ENCODE measurements at regions of chrX and their contacts with region 1.

Region 1: GRCh38 chrX:154748712-154749343 is 2.0 kb downstream of the GAB3 start:
- DNase-seq: peak; percentile 62
- H3K4me3 Mint-ChIP-seq: peak overlapping the region; percentile 15
- H3K27ac Mint-ChIP-seq: no peak overlapping the region
- H3K4me1 Mint-ChIP-seq: peaks cover 15% of the 10 kb centered on the region
- H3K27me3 Mint-ChIP-seq: no peaks in the 10 kb centered on the region

Region 2: GRCh38 chrX:154712781-154713740 is 35.8 kb before region 1 on chrX:
- CTCF ChIA-PET with region 1: interaction called, 36 read pairs
- intact Hi-C with region 1: no loop called
- DNase-seq: peak; percentile 27
- H3K4me3 Mint-ChIP-seq: no peak overlapping the region
- H3K27ac Mint-ChIP-seq: no peak overlapping the region
- H3K4me1 Mint-ChIP-seq: peaks cover 15% of the 10 kb centered on the region
- H3K27me3 Mint-ChIP-seq: no peaks in the 10 kb centered on the region

Region 3: DNA sequence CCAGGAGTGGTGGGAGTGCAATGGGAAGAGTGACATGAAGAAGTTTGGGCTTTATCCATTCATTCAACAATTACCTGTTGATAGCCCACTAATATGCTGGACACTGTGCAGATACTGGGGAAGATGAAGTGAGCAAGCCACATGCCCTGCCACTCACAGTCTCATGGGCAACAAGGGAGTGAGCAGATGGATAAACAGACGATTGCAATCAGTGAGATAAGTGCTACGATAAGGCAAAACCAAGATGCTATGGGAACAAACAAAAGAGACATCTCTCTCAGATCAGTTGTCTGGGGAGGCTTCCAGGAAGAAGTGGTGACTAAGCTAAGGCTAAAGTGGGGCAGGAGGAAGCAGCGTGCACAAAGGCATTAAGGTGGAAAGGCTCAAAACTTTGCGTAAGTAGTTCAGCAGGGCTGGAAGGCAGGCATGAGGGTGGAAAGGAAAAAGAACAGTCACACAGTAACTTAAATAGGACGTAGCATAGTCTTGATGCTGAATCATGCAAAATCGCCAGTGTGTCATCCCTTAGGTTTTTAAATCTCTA is 29.6 kb before region 1 on chrX:
- CTCF ChIA-PET with region 1: interaction called, 36 read pairs
- intact Hi-C with region 1: loop called (anchors 1 kb)
- DNase-seq: peak; percentile 56
- H3K4me3 Mint-ChIP-seq: peak overlapping the region; percentile 41
- H3K27ac Mint-ChIP-seq: peak overlapping the region; percentile 70
- H3K4me1 Mint-ChIP-seq: peaks cover 24% of the 10 kb centered on the region
- H3K27me3 Mint-ChIP-seq: no peaks in the 10 kb centered on the region

Region 4: GRCh38 chrX:154724993-154725756 is 23.7 kb before region 1 on chrX:
- CTCF ChIA-PET with region 1: interaction called, 36 read pairs
- intact Hi-C with region 1: loop called (anchors 1 kb)
- DNase-seq: no peak
- H3K4me3 Mint-ChIP-seq: no peak overlapping the region
- H3K27ac Mint-ChIP-seq: no peak overlapping the region
- H3K4me1 Mint-ChIP-seq: peaks cover 28% of the 10 kb centered on the region
- H3K27me3 Mint-ChIP-seq: no peaks in the 10 kb centered on the region

Region 5: DNA sequence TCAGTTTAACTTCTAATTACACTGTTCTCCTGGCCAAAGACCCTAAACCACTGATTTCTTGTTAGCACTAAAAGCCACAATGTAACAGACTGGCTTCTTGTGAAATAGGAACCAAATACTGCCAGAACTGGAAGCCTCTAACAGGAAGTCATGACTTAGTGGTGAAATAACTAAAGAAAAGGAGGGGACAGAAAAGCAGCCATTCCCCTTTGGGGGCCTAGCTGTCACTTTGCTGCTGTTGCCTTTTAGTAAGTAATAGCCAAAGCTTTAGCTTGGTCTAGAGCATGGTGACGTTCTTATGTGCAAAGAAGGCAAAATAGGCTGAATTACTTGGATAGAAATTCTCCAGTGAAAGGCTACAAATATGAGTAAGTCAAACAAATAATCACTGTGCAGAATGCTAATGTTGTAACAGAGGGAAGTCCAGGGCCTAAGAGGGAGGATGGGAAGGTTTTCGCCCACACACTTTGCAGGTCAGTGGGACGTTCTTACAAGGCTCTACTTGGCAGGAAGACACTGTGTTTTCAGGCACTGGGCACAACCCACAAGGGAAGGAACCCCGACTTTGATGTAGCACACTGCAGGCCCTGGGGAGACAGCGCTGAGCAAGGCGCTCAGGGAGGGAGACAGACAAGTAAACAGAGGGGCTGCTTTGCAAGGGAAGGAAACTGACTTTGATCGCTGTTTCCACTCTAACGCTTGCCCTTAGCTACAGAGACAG is 14.6 kb before region 1 on chrX:
- CTCF ChIA-PET with region 1: interaction called, 14 read pairs
- intact Hi-C with region 1: loop called (anchors 2 kb)
- DNase-seq: peak; percentile 37
- H3K4me3 Mint-ChIP-seq: peak overlapping the region; percentile 62
- H3K27ac Mint-ChIP-seq: peak overlapping the region; percentile 85
- H3K4me1 Mint-ChIP-seq: peaks cover 62% of the 10 kb centered on the region
- H3K27me3 Mint-ChIP-seq: no peaks in the 10 kb centered on the region

Region 6: DNA sequence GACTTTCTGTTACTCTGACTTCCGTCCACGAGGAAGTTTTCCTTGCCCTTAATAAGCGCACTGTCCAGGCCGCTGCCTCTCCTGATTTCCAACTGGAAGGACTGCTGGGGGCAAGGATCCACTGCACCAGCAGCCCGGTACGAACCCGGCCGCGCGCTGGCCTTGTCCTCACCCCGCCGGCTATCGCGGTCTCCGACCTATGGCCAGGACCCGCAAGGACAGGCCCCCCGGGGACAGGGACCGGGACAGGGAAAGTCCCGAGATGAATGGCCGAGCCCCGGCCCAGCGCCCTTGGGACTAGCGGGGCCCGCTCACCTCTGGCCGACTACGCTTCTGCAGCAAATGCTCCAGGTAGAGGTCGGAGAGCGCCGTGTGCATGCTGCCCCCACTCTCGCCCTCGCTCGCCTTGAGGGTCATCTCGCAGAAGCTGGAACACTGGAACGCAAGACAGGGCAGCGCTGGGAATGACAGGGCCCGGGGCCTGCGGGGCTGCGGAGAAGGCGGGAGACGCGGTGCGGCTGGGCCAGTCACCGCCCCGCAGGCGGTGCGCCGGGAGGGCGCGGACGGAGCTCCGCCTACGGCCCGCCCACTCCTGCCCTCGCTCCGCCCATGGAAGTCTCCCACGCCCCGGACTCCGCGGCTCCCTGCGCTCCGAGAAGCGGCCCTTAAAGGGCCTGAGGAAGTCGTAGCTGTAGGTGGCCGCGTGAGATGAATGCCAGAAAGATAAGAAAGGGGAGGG is 56.3 kb after region 1 on chrX and contains the start of gene MPP1:
- CTCF ChIA-PET with region 1: no interaction called
- intact Hi-C with region 1: no loop called
- DNase-seq: peak; percentile 78
- H3K4me3 Mint-ChIP-seq: peak within 1 kb of the TSS; percentile 74
- H3K27ac Mint-ChIP-seq: no peak within 1 kb of the TSS
- H3K4me1 Mint-ChIP-seq: peaks cover 38% of the 10 kb centered on the region
- H3K27me3 Mint-ChIP-seq: no peaks in the 10 kb centered on the region
- total RNA-seq, gene MPP1: 23.9 to 24.3 TPM

Region 7: DNA sequence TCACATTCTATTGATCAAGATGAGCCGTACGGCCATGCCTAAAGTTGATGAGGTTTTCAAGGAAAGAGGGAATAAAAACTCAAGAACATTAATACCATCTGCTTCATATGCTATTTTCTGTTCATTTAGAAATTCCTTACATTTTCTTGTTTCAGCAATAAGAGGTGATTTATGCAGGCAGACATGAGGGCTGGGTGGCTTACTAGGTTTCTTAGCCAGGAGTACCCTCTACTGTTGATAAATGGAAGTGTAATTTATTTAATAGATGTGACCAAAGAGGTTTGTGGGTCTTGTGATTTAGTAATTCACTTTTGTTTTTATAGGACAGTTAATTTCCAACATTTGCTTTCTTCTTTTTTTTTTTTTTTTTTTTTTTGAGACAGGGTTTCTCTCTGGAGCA is 92.0 kb after region 1 on chrX:
- CTCF ChIA-PET with region 1: interaction called, 3 read pairs
- intact Hi-C with region 1: loop called (anchors 1 kb)
- DNase-seq: peak; percentile 8
- H3K4me3 Mint-ChIP-seq: no peak overlapping the region
- H3K27ac Mint-ChIP-seq: no peak overlapping the region
- H3K4me1 Mint-ChIP-seq: no peaks in the 10 kb centered on the region
- H3K27me3 Mint-ChIP-seq: no peaks in the 10 kb centered on the region

Region 8: DNA sequence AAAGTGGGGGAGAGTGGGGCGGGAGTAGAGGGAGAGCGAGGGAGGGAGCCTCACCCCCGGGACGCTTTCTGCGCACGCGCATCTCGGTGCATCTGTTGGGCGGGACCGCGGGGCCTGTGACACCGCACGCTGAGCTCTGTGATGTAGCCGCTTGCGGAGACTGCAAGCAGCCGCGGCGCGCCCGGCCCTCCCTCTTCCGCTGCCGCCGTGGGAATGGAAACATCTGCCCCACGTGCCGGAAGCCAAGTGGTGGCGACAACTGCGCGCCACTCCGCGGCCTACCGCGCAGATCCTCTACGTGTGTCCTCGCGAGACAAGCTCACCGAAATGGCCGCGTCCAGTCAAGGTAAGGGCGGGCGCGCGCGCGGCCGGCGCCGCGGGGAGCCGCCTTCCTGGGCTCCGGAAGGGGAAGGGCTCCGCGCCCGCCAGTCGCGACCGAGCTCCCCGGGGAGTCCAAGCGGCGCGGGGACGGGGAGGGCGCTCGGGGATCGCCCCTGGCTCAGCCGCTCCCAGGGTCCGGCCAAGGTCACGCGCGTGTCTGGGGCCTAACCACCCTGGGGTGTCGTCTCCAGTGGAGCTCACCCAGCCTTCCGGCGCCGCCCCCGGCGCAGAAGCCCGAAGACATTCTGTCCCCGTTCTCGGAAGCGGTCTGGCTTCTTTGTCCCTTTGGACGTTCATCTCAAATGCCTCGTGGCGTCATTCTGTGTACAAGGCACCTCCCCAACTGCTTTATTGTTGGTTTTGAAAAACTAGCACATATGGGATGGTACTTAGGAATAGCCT is 278.1 kb after region 1 on chrX and contains the start of gene FUNDC2:
- CTCF ChIA-PET with region 1: no interaction called
- intact Hi-C with region 1: no loop called
- DNase-seq: peak; percentile 92
- H3K4me3 Mint-ChIP-seq: peak within 1 kb of the TSS; percentile 86
- H3K27ac Mint-ChIP-seq: peak within 1 kb of the TSS; percentile 93
- H3K4me1 Mint-ChIP-seq: peaks cover 23% of the 10 kb centered on the region
- H3K27me3 Mint-ChIP-seq: no peaks in the 10 kb centered on the region
- total RNA-seq, gene FUNDC2: 94.3 to 95.5 TPM